Esophagus muscularis mucosa (tissue), 4 donors: ENCODE measurements at regions of chr12 and their contacts with region 1.

Region 1: DNA sequence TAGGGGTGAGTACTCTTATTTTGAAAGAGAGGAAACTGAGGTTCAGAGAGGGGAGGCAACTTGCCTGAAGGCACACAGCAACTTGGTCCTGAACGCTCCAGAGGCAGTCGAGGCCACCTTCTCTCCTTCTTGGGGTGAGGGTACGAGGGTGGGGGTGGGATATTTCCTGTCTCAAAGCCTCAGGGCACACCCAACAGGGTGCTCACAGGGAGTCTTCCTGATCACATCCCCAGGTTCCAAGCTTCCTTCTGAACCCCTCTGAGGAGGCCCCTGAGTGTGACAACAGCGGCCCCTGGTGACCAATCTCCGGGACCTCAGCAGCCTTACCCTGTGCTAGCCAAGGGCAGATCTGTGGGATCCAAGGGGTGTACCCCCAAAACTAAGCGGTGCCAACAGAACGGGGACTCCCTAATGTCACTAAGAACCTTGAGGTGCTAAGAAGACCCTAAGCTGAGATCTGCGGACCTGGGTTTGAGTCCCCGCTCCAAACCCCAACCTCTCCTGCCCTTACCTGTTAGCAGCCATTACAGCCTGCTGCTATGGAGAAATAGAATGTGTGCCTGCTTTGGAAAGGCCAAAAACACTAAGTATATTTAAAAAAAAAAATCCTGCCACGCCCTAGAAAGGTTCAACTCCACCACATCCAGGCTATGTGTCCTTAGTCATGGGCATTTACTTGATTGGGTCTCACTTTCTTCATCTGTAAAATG is 57.9 kb downstream of the TRPV4 start:
- DNase-seq: no peak
- H3K4me3 ChIP-seq: no peak overlapping the region
- H3K27ac ChIP-seq: no peak overlapping the region
- H3K4me1 ChIP-seq: peaks cover 6 to 20% (median 14%) of the 10 kb centered on the region in 4 donors
- H3K27me3 ChIP-seq: peaks cover 0 to 3% (median 0%) of the 10 kb centered on the region in 4 donors
- CTCF ChIP-seq: peak; percentile 82 to 91 (median 85)
- EP300 ChIP-seq: no peak
- POLR2A ChIP-seq: no peak

Region 2: DNA sequence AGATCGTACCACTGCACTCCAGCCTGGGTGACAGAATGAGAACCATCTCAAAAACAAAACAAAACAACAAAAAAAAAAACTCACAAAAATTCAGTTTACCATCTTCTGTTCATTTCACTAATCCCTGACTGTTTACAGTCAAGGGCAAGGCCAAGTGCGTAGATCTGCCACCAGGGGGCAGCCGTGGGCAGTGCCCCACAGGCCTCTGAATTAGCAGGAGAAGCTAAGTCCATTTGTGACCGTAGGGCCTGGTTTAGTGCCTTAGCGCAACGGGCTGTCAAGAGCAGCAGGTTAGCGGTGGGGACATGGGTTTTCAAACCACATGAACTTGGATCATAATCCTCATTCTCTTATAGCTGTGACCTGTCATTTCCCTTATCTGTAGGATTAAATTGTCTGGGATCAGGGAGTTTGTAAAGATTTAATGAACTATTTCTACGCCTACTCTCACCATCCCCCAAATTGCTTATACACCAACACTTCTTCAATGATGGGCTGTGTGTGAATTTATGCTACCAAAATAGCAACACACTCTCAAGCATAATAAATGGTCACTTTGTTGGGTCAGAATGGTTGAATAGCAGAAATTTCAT is 347.2 kb before region 1 on chr12:
- intact Hi-C with region 1: loop called (anchors 10 kb)
- DNase-seq: no peak
- H3K4me3 ChIP-seq: no peak overlapping the region
- H3K27ac ChIP-seq: no peak overlapping the region
- H3K4me1 ChIP-seq: peaks cover 8 to 13% (median 10%) of the 10 kb centered on the region in 4 donors
- H3K27me3 ChIP-seq: peaks cover 0 to 2% (median 0%) of the 10 kb centered on the region in 4 donors
- CTCF ChIP-seq: peak; percentile 92 to 98 (median 96)
- EP300 ChIP-seq: no peak
- POLR2A ChIP-seq: no peak

Region 3: DNA sequence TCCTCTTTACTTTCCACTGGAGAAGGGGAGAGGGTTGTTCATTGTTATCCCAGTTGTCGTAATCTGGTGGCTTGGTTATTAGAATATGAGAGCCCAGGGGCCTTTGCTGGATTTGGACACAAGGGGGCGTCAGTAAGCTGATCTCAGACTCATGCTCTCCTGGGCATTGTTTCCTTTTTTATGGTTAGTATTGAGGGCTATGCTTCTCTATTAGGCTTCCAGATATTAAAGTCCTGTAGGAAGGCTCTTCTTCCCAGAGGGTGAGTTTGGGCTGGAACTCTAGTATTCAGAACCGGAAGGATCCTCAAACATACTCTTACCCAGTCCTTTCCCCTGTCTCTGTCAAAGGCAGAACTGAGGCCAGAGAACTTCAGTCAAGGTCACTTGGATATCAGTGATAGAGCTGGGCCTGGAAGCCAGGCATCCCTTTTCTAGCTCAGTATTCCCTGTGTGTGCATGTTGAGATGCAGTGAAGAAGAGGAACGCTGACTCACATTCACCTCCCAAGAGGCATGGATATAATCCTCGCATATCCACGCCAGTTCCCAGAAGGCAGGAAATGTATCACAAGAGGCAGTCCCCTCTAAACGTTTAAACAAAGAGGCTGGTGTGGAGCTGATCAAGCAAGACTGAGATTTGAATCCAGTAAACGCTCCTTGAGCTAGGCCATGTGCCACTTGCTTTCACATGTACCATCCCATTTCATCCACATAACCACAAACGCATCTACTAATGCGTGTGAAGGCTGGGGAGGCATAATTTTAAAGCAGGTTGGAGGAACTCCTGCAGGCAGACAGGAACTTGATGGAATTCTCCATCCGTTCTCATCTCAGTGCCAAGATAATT is 256.3 kb before region 1 on chr12:
- intact Hi-C with region 1: loop called (anchors 5 kb)
- DNase-seq: no peak
- H3K4me3 ChIP-seq: no peak overlapping the region
- H3K27ac ChIP-seq: peak overlapping the region; percentile 20 to 71 (median 34)
- H3K4me1 ChIP-seq: peaks cover 7 to 26% (median 21%) of the 10 kb centered on the region in 4 donors
- H3K27me3 ChIP-seq: no peaks in the 10 kb centered on the region
- CTCF ChIP-seq: peak; percentile 67 to 83 (median 72)
- EP300 ChIP-seq: no peak
- POLR2A ChIP-seq: no peak

Region 4: DNA sequence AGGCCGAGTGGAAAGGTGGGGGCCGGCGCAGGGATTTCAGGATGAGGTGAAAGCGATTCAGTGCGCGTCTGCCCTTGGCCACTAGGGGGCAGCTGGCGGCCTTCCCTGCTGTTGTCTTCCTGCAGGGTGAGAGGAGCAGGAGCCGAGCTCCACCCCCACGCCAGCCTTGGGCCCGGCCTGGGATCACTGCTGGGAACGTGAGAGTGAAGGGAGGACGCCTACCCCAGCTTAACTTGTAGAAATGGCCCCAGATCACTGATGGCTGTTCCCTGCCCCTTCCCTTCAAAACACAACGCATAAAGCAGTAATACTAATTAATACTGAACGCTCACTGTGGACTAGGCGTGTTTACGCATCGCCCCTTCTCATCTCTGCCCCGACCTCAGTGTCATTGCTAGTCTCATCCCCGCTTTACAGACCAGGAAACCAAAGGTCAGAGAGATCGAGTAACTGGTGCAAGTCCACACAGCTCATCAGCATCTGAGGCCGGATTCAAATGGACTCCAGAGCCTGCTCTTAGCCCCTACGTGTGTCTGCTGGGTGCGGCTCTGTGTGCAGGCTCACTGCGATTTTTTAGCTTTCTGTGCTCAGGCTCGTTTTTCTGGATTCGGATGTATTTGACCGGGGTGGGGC is 177.4 kb before region 1 on chr12:
- intact Hi-C with region 1: loop called (anchors 1 kb)
- DNase-seq: peak; percentile 96
- H3K4me3 ChIP-seq: no peak overlapping the region
- H3K27ac ChIP-seq: no peak overlapping the region
- H3K4me1 ChIP-seq: peaks cover 8 to 13% (median 10%) of the 10 kb centered on the region in 4 donors
- H3K27me3 ChIP-seq: peaks cover 0 to 4% (median 0%) of the 10 kb centered on the region in 4 donors
- CTCF ChIP-seq: peak; percentile 95 to 99 (median 97)
- EP300 ChIP-seq: no peak
- POLR2A ChIP-seq: no peak

Region 5: GRCh38 chr12:109713187-109713984 is 61.9 kb before region 1 on chr12 and contains the start of gene FAM222A:
- intact Hi-C with region 1: loop called (anchors 5 kb)
- DNase-seq: peak; percentile 98
- H3K4me3 ChIP-seq: peak within 1 kb of the TSS; percentile 59 to 84 (median 74)
- H3K27ac ChIP-seq: peak within 1 kb of the TSS; percentile 54 to 82 (median 75)
- H3K4me1 ChIP-seq: peaks cover 34 to 58% (median 50%) of the 10 kb centered on the region in 4 donors
- H3K27me3 ChIP-seq: peaks cover 3 to 67% (median 13%) of the 10 kb centered on the region in 4 donors
- CTCF ChIP-seq: peak; percentile 29 to 42 (median 29)
- EP300 ChIP-seq: no peak
- POLR2A ChIP-seq: no peak
- total RNA-seq, gene FAM222A: 0.42 to 3.8 (median 3.2) TPM

Region 6: GRCh38 chr12:109719236-109720022 is 55.9 kb before region 1 on chr12:
- intact Hi-C with region 1: loop called (anchors 5 kb)
- DNase-seq: no peak
- H3K4me3 ChIP-seq: no peak overlapping the region
- H3K27ac ChIP-seq: no peak overlapping the region
- H3K4me1 ChIP-seq: peaks cover 83 to 94% (median 89%) of the 10 kb centered on the region in 4 donors
- H3K27me3 ChIP-seq: peaks cover 0 to 24% (median 5%) of the 10 kb centered on the region in 4 donors
- CTCF ChIP-seq: no peak
- EP300 ChIP-seq: no peak
- POLR2A ChIP-seq: no peak